Activated CD8-positive, alpha-beta T cell treated with anti-CD3 and anti-CD28 coated beads, Interleukin-2, amount 10 ng/mL, durations not matched to agents 7 days and 5 days (primary cell): ENCODE measurements at regions of chr20 and their contacts with region 1.

Region 1: DNA sequence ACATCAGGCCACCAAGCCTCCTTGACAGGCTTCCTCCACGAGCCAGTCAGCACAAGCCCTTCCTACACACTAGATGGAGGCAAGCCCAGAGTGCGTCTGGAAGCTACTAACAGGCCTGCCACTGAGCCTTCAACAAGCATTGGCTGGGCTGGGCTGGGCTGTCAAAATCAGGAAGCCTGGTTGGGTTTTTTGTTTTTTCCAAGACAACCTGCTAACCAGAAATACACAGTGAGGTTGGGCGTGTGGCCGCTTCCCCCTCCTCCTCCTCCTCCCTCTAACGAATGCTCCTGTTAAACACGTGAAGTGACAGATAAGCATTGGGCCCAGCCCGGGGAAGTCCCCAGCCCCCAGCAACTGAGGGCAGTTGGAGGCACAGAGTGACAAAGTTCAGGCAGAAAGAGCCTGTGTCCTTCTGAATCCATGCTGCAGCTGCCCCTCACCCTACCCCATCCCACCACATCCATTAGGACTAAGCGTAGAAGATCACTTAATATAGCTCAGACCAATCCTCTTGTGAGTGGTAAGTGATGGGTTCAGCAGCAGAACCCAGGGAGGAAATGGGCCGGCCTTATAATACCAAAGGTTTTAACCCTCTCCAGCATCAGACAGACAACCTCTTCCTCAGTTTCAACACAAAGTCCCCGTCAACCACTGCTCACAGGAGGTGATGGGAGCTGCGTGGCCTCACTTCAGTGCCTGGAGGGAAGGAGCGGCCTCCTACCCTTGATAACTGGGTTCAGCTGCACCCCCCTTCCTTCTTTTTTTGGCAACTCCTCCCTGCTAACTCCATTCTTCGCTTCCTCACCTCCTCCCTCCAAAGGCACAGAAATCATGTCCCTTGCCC is 1.1 kb downstream of the NFATC2 start:
- DNase-seq: peak; percentile 93
- ATAC-seq: peak; percentile 86
- H3K4me3 Mint-ChIP-seq: peak overlapping the region; percentile 93
- H3K27ac Mint-ChIP-seq: peak overlapping the region; percentile 98
- H3K4me1 Mint-ChIP-seq: peaks cover 55% of the 10 kb centered on the region
- H3K27me3 Mint-ChIP-seq: peaks cover 11% of the 10 kb centered on the region

Region 2: GRCh38 chr20:51404298-51405060 is 136.9 kb before region 1 on chr20:
- CTCF ChIA-PET with region 1: interaction called, 14 read pairs
- POLR2A ChIA-PET with region 1: interaction called, 19 read pairs
- DNase-seq: peak; percentile 88
- ATAC-seq: peak; percentile 79
- H3K4me3 Mint-ChIP-seq: no peak overlapping the region
- H3K27ac Mint-ChIP-seq: peak overlapping the region; percentile 98
- H3K4me1 Mint-ChIP-seq: peaks cover 93% of the 10 kb centered on the region
- H3K27me3 Mint-ChIP-seq: no peaks in the 10 kb centered on the region

Region 3: DNA sequence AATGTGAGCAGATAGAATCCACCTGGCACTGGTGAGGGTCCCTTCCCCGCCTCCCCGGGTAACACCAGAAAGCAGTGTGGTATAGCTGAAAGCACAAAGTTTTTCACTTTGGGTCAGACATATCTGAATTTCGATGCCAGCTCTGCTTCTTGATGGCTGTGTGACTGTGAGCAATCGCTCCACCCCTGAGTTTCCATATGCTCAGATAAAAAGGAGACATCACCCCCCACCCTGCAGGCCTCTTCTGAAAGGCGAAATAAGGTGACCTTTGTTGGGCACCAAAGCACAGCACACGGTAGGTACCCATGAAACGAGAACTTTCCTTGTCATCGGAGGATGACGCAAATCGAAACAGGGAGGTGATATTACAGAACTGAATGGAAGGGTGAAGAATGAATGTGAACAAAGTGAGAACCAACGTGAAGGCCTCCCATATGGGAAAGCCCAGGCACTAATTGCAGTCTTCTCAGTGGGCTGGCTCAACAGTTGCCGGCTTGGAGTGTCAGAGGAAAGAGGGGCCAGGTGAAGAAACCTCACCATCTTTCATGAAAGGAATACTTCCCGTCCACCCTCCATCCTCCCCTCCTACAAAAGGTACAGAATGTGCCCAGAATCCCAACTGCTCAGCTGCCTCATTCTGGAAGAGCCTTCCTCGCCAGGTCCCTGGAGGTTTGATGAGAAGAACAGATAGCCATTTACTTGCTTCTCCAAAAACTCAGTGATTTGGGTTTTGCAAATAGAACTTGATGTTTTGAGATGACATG is 60.7 kb before region 1 on chr20:
- CTCF ChIA-PET with region 1: interaction called, 6 read pairs
- POLR2A ChIA-PET with region 1: interaction called, 26 read pairs
- DNase-seq: peak; percentile 48
- ATAC-seq: peak; percentile 59
- H3K4me3 Mint-ChIP-seq: peak overlapping the region; percentile 53
- H3K27ac Mint-ChIP-seq: peak overlapping the region; percentile 92
- H3K4me1 Mint-ChIP-seq: peaks cover 92% of the 10 kb centered on the region
- H3K27me3 Mint-ChIP-seq: no peaks in the 10 kb centered on the region

Region 4: GRCh38 chr20:51512645-51513044 is 28.8 kb before region 1 on chr20:
- CTCF ChIA-PET with region 1: interaction called, 20 read pairs
- POLR2A ChIA-PET with region 1: interaction called, 12 read pairs
- DNase-seq: peak; percentile 44
- ATAC-seq: peak; percentile 87
- H3K4me3 Mint-ChIP-seq: peak overlapping the region; percentile 50
- H3K27ac Mint-ChIP-seq: peak overlapping the region; percentile 85
- H3K4me1 Mint-ChIP-seq: peaks cover 77% of the 10 kb centered on the region
- H3K27me3 Mint-ChIP-seq: no peaks in the 10 kb centered on the region

Region 5: DNA sequence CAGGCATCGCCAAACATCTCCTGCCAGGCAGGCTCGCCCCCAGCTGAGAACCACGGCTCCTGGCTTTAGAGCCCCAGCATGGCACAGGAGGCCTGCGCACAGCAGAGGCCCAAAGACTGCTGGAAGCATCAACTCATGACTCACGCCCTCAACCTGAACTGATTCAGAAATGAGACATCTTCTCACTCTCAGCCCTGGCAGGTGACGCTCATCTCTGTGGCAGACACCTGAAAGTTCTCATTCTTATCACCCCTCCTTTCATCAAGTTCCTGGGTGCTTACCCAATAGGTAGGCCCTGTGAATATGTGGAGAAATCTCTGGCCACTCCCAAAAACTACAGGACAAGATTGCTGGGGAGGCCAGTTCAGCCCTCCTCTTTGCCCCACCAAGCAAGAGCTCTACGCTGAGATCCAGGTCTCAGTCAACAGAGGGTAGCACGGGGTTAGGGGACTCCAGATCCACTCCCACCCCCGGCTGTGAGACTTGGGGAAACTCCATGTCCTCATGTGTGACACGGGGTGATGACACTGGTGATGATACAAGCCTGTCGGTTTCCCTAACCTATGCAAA is 10.2 kb before region 1 on chr20:
- CTCF ChIA-PET with region 1: interaction called, 16 read pairs
- POLR2A ChIA-PET with region 1: interaction called, 30 read pairs
- DNase-seq: peak; percentile 61
- ATAC-seq: peak; percentile 65
- H3K4me3 Mint-ChIP-seq: no peak overlapping the region
- H3K27ac Mint-ChIP-seq: peak overlapping the region; percentile 88
- H3K4me1 Mint-ChIP-seq: peaks cover 93% of the 10 kb centered on the region
- H3K27me3 Mint-ChIP-seq: no peaks in the 10 kb centered on the region

Region 6: GRCh38 chr20:51732096-51732791 is 190.8 kb after region 1 on chr20:
- CTCF ChIA-PET with region 1: no interaction called
- POLR2A ChIA-PET with region 1: no interaction called
- DNase-seq: no peak
- ATAC-seq: no peak
- H3K4me3 Mint-ChIP-seq: no peak overlapping the region
- H3K27ac Mint-ChIP-seq: no peak overlapping the region
- H3K4me1 Mint-ChIP-seq: no peaks in the 10 kb centered on the region
- H3K27me3 Mint-ChIP-seq: peaks cover 6% of the 10 kb centered on the region